ENCODE measurements at regions of chr17 and their contacts with region 1.

Region 1: GRCh38 chr17:3012926-3013581 is 50.4 kb downstream of the OR1D5 start:
- DNase-seq: peak; percentile 69
- H3K4me3 Mint-ChIP-seq: no peak overlapping the region
- H3K27ac Mint-ChIP-seq: no peak overlapping the region
- H3K4me1 Mint-ChIP-seq: no peaks in the 10 kb centered on the region
- H3K27me3 Mint-ChIP-seq: no peaks in the 10 kb centered on the region
- CTCF ChIP-seq: peak; percentile 66

Region 2: DNA sequence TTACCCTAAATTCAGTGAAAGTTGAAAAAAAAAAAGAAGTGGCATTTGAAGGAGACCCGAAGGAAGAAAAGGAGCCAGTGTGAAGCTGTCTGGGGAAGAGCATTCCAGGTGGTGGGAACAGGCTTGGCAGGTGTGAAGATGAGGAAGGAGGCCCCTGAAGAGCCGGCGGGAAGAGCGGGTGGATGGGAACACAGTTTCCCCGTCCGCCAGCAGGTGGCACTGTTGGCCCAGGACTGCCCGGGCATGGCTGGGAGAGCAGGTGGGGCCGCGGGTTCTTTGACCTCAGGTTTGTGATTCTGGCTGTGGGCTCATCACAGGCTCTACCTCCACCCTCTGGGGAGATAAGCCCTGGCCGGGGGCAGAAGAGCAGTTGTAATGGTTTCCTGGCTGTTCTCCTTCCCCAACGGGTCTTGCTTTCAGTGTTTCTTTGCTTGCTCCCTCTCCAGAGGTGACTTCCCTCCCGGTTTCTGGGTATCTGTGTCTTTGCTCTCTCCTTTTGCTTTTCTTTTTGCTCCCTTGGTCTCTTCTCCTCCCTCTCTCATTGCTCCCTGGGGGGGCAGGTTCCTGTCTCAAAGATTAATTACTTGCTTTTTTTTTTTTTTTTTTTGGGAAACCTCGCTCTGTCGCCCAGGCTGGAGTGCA is 184.5 kb before region 1 on chr17:
- CTCF ChIA-PET with region 1: interaction called, 12 read pairs
- POLR2A ChIA-PET with region 1: no interaction called
- intact Hi-C with region 1: loop called (anchors 1 kb)
- DNase-seq: peak; percentile 69
- H3K4me3 Mint-ChIP-seq: no peak overlapping the region
- H3K27ac Mint-ChIP-seq: no peak overlapping the region
- H3K4me1 Mint-ChIP-seq: no peaks in the 10 kb centered on the region
- H3K27me3 Mint-ChIP-seq: no peaks in the 10 kb centered on the region
- CTCF ChIP-seq: peak; percentile 97

Region 3: DNA sequence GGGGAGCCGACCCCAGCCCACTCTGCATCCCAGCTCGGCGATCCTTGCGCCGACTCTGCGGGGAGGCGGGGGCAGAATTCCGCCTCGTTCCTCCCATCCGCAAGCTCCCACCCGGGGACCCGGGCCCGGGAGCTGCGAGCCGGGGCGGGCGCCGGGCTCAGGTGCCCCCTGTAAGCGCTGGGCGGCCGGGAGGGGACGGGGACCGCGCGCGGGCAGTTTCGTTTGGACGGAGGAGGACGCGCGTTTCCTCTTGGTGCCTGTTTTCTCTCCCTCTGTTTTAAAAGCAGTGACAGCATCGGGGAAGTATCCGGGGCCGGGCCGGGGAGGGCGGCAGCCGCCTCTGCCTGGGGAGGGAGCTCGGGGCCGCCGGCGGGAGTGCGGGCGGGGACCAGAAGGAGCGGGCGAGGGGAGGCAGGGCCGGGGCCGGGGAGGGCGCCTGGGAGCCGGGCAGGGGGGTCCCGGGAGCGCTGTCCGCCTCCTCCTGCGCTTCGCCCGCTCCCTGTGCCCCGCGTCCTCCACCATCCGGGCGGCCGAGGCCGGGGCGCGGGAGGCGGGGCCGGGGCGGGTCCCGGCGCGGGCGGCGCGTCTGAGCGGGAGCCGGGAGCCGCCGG is 159.8 kb before region 1 on chr17:
- CTCF ChIA-PET with region 1: interaction called, 118 read pairs
- POLR2A ChIA-PET with region 1: interaction called, 3 read pairs
- intact Hi-C with region 1: loop called (anchors 1 kb)
- DNase-seq: peak; percentile 15
- H3K4me3 Mint-ChIP-seq: peak overlapping the region; percentile 78
- H3K27ac Mint-ChIP-seq: no peak overlapping the region
- H3K4me1 Mint-ChIP-seq: peaks cover 15% of the 10 kb centered on the region
- H3K27me3 Mint-ChIP-seq: no peaks in the 10 kb centered on the region
- CTCF ChIP-seq: no peak

Region 4: DNA sequence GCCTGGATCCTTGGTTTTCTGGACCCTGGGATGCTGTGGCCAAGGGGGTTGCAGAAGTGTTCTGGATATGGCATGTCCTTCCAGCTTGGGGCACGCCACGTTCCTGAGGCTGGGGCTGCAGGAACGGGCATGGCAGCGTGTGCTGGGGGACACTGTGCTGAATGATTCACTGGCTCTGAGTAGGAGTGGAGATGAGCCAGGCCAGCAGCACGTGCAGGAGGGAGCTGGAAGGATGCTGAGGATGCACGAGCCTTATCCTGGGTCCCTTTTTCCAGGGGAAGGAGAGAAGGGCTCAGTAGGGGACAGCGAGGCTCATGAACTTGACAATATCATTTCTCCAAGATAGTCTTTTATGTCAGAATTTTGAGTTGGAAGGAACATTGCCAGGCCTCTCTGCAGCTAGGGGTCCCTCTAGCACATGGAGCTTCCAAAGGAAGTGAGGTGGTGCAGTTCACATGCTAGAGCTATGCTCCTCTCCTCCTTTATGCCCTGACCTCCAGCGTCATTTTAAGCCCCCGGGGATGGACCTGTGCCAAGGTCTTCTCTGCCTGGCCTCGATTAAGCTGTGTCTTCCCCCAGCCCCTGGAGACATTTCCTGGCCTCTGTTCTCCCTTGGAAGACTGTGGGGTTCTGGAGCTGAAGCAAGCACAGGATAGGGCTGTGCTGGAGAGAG is 75.6 kb before region 1 on chr17:
- CTCF ChIA-PET with region 1: no interaction called
- POLR2A ChIA-PET with region 1: no interaction called
- intact Hi-C with region 1: loop called (anchors 2 kb)
- DNase-seq: no peak
- H3K4me3 Mint-ChIP-seq: no peak overlapping the region
- H3K27ac Mint-ChIP-seq: no peak overlapping the region
- H3K4me1 Mint-ChIP-seq: peaks cover 7% of the 10 kb centered on the region
- H3K27me3 Mint-ChIP-seq: no peaks in the 10 kb centered on the region
- CTCF ChIP-seq: no peak

Region 5: GRCh38 chr17:2982854-2983253 is 30.2 kb before region 1 on chr17:
- CTCF ChIA-PET with region 1: no interaction called
- POLR2A ChIA-PET with region 1: no interaction called
- intact Hi-C with region 1: no loop called
- DNase-seq: no peak
- H3K4me3 Mint-ChIP-seq: no peak overlapping the region
- H3K27ac Mint-ChIP-seq: no peak overlapping the region
- H3K4me1 Mint-ChIP-seq: peaks cover 10% of the 10 kb centered on the region
- H3K27me3 Mint-ChIP-seq: no peaks in the 10 kb centered on the region
- CTCF ChIP-seq: no peak

Region 6: DNA sequence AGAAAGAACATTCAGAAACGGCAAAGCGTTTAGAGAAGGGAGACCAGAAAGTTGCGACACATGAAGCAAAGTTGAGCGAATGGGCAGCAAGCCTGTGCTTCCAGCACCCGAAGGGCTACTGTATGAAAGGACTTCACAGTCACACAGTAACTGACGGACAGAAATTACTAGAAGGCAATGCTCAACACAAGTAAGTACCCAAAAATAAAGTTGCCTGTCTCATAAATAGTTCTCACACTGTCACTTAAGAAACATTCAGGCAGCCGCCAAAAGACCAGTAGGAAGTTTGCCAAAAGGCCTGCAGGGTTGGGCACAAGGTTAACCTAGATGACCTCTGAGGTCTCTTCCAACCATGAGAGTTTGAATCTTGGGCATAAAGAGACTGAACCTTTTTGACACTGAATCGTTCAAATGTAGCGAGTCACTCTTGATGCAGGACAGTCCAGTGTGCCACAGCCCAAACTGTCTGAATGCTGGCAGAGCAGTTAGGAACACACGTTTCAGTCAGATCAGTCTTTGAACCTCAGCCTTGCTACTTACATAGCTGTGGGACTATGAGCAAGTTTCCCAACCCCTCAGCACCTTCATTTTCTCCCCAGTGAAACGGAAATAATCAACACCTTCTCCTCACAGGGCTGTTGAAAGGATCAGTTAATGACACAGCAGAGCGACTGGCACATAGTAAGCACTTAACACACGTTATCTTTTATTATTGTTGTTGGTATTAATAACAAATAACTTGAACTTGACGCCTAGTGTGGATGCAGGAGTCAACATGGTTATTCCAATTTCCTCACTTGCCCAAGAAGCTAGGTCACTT is 822.6 kb after region 1 on chr17:
- CTCF ChIA-PET with region 1: no interaction called
- POLR2A ChIA-PET with region 1: no interaction called
- intact Hi-C with region 1: no loop called
- DNase-seq: peak; percentile 14
- H3K4me3 Mint-ChIP-seq: no peak overlapping the region
- H3K27ac Mint-ChIP-seq: no peak overlapping the region
- H3K4me1 Mint-ChIP-seq: no peaks in the 10 kb centered on the region
- H3K27me3 Mint-ChIP-seq: no peaks in the 10 kb centered on the region
- CTCF ChIP-seq: no peak